GM12878 (cell line): ENCODE measurements at regions of chr5 and their contacts with region 1.

Region 1: GRCh38 chr5:158953929-158954534 is 145.7 kb downstream of the EBF1 start:
- DNase-seq: peak; percentile 98
- ATAC-seq: peak; percentile 79
- H3K4me3 ChIP-seq: 0 out of 2 replicates have a peak overlapping the region, but pooled peaks have one; percentile 6
- H3K27ac ChIP-seq: peak overlapping the region; percentile 93
- H3K4me1 ChIP-seq: peaks cover 70% of the 10 kb centered on the region
- H3K27me3 ChIP-seq: no peaks in the 10 kb centered on the region
- CTCF ChIP-seq: no peak
- EP300 ChIP-seq: peak; percentile 94 to 98; a peak in 3 of 4 replicates
- POLR2A ChIP-seq: peak; percentile 47; the same call in 1 of the 2 replicates
- RAD21 ChIP-seq: 0 out of 2 replicates have a peak, but pooled peaks have one; percentile 23

Region 2: DNA sequence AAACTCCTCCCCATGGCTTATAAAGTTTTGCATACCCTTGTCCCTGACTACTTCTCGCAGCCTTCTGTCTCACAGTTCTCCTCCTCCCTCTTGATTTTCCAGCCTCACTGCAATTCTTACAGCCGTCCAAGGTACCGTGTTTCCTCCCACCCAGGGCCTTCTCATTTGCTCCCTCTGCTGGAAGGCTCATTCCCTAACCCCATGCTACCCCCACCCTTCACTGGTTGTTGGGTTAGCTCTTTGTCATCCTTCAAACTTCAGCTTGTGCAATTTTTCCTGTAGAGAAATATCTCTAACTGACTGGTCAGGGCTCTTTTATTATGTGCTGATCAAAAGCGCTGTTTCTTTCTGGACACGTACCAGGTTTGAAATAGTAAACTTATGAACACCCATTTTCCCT is 183.5 kb before region 1 on chr5:
- CTCF ChIA-PET with region 1: interaction called, 4 read pairs
- POLR2A ChIA-PET with region 1: interaction called, 6 read pairs
- RAD21 ChIA-PET with region 1: interaction called, 16 read pairs
- SMC1A ChIA-PET with region 1: interaction called, 20 read pairs
- in situ Hi-C with region 1: no loop called
- intact Hi-C with region 1: no loop called
- DNase-seq: no peak
- ATAC-seq: no peak
- H3K4me3 ChIP-seq: no peak overlapping the region
- H3K27ac ChIP-seq: no peak overlapping the region
- H3K4me1 ChIP-seq: peaks cover 4% of the 10 kb centered on the region; the same call in 1 of the 2 replicates
- H3K27me3 ChIP-seq: no peaks in the 10 kb centered on the region
- CTCF ChIP-seq: peak in 2 of 3 experiments; percentile 17 to 38; a peak in 2 of 6 replicates
- EP300 ChIP-seq: no peak
- POLR2A ChIP-seq: no peak
- RAD21 ChIP-seq: 0 out of 2 replicates have a peak, but pooled peaks have one; percentile 15

Region 3: GRCh38 chr5:158880483-158881001 is 73.5 kb before region 1 on chr5:
- CTCF ChIA-PET with region 1: interaction called, 17 read pairs
- POLR2A ChIA-PET with region 1: interaction called, 12 read pairs
- RAD21 ChIA-PET with region 1: interaction called, 97 read pairs
- SMC1A ChIA-PET with region 1: interaction called, 48 read pairs
- in situ Hi-C with region 1: no loop called
- intact Hi-C with region 1: loop called (anchors 1 kb)
- DNase-seq: no peak
- ATAC-seq: peak; percentile 31
- H3K4me3 ChIP-seq: peak overlapping the region; percentile 24; the same call in 1 of the 2 replicates
- H3K27ac ChIP-seq: peak overlapping the region; percentile 83
- H3K4me1 ChIP-seq: peaks cover 66% of the 10 kb centered on the region
- H3K27me3 ChIP-seq: no peaks in the 10 kb centered on the region
- CTCF ChIP-seq: peak in 2 of 3 experiments; percentile 29 to 53; a peak in 3 of 6 replicates
- EP300 ChIP-seq: peak in 1 of 2 experiments; percentile 2; a peak in 1 of 4 replicates
- POLR2A ChIP-seq: no peak
- RAD21 ChIP-seq: peak; percentile 56

Region 4: GRCh38 chr5:158937381-158937952 is 16.6 kb before region 1 on chr5:
- CTCF ChIA-PET with region 1: interaction called, 8 read pairs
- POLR2A ChIA-PET with region 1: interaction called, 6 read pairs
- RAD21 ChIA-PET with region 1: interaction called, 12 read pairs
- SMC1A ChIA-PET with region 1: interaction called, 32 read pairs
- in situ Hi-C with region 1: no loop called
- intact Hi-C with region 1: no loop called
- DNase-seq: no peak
- ATAC-seq: no peak
- H3K4me3 ChIP-seq: no peak overlapping the region
- H3K27ac ChIP-seq: no peak overlapping the region
- H3K4me1 ChIP-seq: peaks cover 8% of the 10 kb centered on the region; the same call in 1 of the 2 replicates
- H3K27me3 ChIP-seq: no peaks in the 10 kb centered on the region
- CTCF ChIP-seq: no peak
- EP300 ChIP-seq: no peak
- POLR2A ChIP-seq: no peak
- RAD21 ChIP-seq: no peak

Region 5: GRCh38 chr5:159010661-159011442 is 56.8 kb after region 1 on chr5:
- CTCF ChIA-PET with region 1: interaction called, 5 read pairs
- POLR2A ChIA-PET with region 1: interaction called, 30 read pairs
- RAD21 ChIA-PET with region 1: interaction called, 33 read pairs
- SMC1A ChIA-PET with region 1: interaction called, 117 read pairs
- in situ Hi-C with region 1: no loop called
- intact Hi-C with region 1: loop called (anchors 2 kb)
- DNase-seq: peak; percentile 84
- ATAC-seq: peak; percentile 91
- H3K4me3 ChIP-seq: peak overlapping the region; percentile 63
- H3K27ac ChIP-seq: peak overlapping the region; percentile 90
- H3K4me1 ChIP-seq: peaks cover 17% of the 10 kb centered on the region
- H3K27me3 ChIP-seq: no peaks in the 10 kb centered on the region
- CTCF ChIP-seq: no peak
- EP300 ChIP-seq: peak in 1 of 2 experiments; percentile 43; a peak in 1 of 4 replicates
- POLR2A ChIP-seq: peak; percentile 50
- RAD21 ChIP-seq: no peak

Region 6: GRCh38 chr5:159094745-159095144 is 140.7 kb after region 1 on chr5:
- CTCF ChIA-PET with region 1: interaction called, 9 read pairs
- POLR2A ChIA-PET with region 1: interaction called, 29 read pairs
- RAD21 ChIA-PET with region 1: interaction called, 131 read pairs
- SMC1A ChIA-PET with region 1: interaction called, 122 read pairs
- in situ Hi-C with region 1: loop called (anchors 5 kb)
- intact Hi-C with region 1: no loop called
- DNase-seq: no peak
- ATAC-seq: peak; percentile 35
- H3K4me3 ChIP-seq: peak overlapping the region; percentile 88
- H3K27ac ChIP-seq: peak overlapping the region; percentile 68
- H3K4me1 ChIP-seq: peaks cover 5% of the 10 kb centered on the region; the same call in 1 of the 2 replicates
- H3K27me3 ChIP-seq: no peaks in the 10 kb centered on the region
- CTCF ChIP-seq: no peak
- EP300 ChIP-seq: no peak
- POLR2A ChIP-seq: no peak
- RAD21 ChIP-seq: no peak